ENCODE measurements at regions of chr9 and their contacts with region 1.

Region 1: DNA sequence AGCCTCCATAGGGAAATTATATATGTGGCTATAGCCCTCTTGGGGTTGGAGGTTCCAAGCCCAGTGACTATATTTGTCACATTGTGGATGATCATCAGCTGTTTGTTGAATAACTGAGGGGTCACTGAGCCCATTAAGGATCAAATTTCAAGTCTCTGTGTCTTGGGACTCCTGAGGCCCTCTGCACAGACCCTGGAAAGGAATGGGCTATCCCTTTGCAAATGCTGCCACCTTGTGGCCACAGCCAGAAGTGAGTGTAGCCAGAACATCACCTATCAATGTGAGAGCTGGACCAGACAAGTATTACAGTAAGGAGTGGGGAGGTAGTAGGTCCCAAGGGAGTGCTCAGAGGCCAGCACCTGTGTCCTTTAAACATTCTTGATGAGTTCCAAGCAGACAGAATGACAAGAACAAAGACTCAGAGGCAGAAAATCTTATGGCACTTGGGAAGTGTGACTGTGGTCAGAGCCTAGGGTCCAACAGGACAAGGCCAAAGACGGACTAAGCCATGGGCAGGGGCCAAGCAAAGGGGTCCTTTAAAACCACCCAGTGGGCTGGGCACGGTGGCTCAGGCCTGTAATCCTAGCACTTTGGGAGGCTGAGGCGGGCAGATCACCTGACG is 8.2 kb downstream of the RPP25L start:
- DNase-seq: peak; percentile 86
- ATAC-seq: peak; percentile 95
- H3K4me3 Mint-ChIP-seq: no peak overlapping the region
- H3K27ac Mint-ChIP-seq: no peak overlapping the region
- H3K4me1 Mint-ChIP-seq: no peaks in the 10 kb centered on the region
- H3K27me3 Mint-ChIP-seq: peaks cover 8% of the 10 kb centered on the region

Region 2: DNA sequence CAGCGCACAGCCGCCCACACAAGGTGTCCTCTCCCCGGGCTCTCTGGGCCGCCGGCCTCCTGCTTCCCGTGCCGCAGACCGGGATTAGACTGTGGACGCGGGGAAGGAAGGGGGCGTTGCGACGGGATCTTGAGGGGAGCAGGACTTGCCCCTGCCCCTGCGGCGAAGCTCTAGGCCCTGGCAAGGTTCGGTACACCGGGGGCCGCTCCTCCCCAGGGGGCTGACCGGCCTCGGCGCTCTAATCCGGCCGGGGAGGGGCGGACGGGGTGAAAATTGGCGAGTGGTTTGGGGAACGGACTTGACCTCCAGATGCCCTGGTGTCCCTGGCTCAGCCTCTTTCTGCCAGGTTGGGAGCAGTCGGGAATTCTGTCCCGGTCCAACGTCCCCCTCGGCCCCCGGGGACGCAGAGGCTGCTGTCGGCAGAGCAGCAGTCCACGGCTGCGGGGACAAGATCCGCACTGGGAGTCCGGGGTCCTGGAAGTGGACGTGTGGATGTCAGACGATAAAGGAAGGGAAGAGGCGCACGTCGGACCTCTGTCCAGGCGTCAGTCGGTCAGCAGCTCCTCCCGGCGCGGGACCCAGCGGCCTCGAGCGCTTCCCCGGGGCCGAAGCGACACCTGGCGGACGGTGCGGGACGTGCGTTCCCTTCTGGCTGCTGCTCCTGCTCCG is 12.3 kb before region 1 on chr9:
- CTCF ChIA-PET with region 1: interaction called, 32 read pairs
- POLR2A ChIA-PET with region 1: interaction called, 5 read pairs
- DNase-seq: peak; percentile 82
- ATAC-seq: peak; percentile 86
- H3K4me3 Mint-ChIP-seq: peak overlapping the region; percentile 39
- H3K27ac Mint-ChIP-seq: no peak overlapping the region
- H3K4me1 Mint-ChIP-seq: peaks cover 25% of the 10 kb centered on the region
- H3K27me3 Mint-ChIP-seq: peaks cover 74% of the 10 kb centered on the region

Region 3: DNA sequence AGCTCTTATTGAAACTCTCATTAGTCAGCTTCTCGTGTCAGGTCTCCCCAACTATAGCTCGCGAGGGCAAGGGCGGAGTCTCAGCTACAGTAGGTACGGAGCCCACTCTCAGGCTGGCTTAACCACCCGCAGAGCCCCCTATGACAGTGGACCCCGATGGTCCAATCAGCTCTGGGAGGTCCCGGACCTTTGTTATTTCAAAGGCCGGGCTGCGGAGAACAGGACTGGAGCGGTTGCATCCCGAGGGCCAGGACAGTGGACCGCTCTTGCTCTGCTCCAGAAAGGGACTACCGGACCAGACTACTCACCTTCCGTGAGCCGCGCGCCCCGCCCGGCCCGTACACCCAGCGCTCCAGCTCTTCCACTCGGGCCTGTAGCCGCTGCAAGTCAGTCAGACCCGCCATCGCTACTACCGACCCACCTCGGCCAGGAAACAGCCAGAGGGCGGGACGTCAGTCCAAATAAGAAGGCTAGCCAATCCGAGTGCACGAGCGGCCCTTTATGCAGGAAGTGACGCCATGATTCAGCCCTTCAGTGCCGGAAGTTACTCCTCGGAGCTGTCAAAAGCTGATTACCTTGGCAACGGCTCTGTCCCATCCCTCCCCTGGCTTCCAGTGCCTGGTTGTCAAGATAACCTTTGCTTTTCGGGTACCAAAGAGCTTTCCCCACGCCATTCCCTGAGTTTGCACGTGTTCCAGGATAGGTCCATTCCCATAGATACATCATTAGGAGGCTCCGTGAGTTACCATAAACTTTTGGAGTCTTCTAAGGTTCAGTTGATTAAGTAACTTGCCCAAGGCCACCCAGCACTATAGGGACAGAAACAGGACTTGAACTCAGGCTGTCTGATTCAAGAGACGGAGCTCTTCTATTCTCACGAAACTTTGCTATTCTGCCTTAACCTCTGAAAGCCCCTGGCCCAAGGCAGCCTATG is 16.6 kb after region 1 on chr9 and contains the start of gene DCTN3:
- CTCF ChIA-PET with region 1: interaction called, 11 read pairs
- POLR2A ChIA-PET with region 1: no interaction called
- DNase-seq: peak; percentile 96
- ATAC-seq: peak; percentile 98
- H3K4me3 Mint-ChIP-seq: peak within 1 kb of the TSS; percentile 90
- H3K27ac Mint-ChIP-seq: peak within 1 kb of the TSS; percentile 86
- H3K4me1 Mint-ChIP-seq: peaks cover 32% of the 10 kb centered on the region
- H3K27me3 Mint-ChIP-seq: peaks cover 30% of the 10 kb centered on the region
- total RNA-seq, gene DCTN3: 134 to 140 TPM